Right ventricle myocardium inferior (tissue), 1 donor: ENCODE measurements at regions of chr11 and their contacts with region 1.

Region 1: GRCh38 chr11:61860054-61860903 is 31.1 kb downstream of the FADS3 start:
- DNase-seq: peak; percentile 78
- ATAC-seq: peak; percentile 77

Region 2: GRCh38 chr11:61827571-61828378 is 32.5 kb before region 1 on chr11 and contains the start of gene FADS2:
- intact Hi-C with region 1: loop called (anchors 5 kb)
- DNase-seq: peak; percentile 94
- ATAC-seq: peak; percentile 87
- total RNA-seq, gene FADS2: 35.7 TPM

Region 3: GRCh38 chr11:62256281-62256680 is 396.0 kb after region 1 on chr11:
- intact Hi-C with region 1: no loop called
- DNase-seq: no peak
- ATAC-seq: no peak